ENCODE measurements at regions of chr2 and their contacts with region 1.

Region 1: DNA sequence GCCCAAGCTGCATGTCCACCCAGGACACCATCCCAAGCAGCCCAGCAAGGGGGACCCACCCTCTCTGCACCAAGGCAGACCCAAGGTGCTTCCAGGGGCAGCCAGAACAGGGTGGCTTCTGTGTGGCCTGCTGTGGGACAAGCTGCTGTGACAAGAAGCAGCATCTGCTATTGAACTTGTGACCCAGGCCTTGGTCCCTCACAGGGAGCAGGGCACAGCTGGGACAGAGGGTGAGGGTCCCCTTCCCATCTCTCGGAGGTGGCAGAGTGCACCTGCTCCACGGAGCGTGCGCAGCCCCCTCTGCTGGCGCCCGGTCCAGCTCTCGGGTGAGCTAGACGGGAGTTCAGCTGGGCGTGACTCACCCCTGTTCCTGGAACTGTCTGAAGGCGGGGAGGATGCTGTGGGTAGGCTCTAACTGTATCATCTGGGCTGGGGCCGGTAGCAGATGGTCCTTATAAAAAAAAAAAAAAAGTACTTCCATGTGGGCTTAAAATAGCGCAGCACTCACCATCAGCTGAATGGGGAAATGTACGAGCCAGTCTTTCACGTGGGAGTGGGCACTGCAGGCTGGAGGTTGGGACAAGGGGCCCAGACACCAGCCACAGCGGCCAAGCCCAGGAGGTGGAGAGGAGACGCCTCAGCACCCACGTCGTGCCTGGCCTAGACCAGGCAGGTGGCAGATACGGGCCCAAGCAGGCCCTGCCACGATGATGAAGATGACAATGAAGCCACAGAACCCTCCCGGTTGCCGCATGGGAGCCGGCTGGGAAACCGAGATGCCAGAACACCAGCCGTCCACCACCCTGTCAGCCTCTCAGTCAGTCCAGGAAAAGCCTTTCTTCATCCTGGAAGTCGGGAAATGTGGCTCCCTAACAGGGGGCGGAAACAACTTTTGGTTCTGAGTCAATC is 136.8 kb upstream of the ID2 start:
- DNase-seq: peak; percentile 96
- H3K4me3 Mint-ChIP-seq: peak overlapping the region; percentile 52
- H3K27ac Mint-ChIP-seq: peak overlapping the region; percentile 100
- H3K4me1 Mint-ChIP-seq: peaks cover 72% of the 10 kb centered on the region
- H3K27me3 Mint-ChIP-seq: no peaks in the 10 kb centered on the region

Region 2: DNA sequence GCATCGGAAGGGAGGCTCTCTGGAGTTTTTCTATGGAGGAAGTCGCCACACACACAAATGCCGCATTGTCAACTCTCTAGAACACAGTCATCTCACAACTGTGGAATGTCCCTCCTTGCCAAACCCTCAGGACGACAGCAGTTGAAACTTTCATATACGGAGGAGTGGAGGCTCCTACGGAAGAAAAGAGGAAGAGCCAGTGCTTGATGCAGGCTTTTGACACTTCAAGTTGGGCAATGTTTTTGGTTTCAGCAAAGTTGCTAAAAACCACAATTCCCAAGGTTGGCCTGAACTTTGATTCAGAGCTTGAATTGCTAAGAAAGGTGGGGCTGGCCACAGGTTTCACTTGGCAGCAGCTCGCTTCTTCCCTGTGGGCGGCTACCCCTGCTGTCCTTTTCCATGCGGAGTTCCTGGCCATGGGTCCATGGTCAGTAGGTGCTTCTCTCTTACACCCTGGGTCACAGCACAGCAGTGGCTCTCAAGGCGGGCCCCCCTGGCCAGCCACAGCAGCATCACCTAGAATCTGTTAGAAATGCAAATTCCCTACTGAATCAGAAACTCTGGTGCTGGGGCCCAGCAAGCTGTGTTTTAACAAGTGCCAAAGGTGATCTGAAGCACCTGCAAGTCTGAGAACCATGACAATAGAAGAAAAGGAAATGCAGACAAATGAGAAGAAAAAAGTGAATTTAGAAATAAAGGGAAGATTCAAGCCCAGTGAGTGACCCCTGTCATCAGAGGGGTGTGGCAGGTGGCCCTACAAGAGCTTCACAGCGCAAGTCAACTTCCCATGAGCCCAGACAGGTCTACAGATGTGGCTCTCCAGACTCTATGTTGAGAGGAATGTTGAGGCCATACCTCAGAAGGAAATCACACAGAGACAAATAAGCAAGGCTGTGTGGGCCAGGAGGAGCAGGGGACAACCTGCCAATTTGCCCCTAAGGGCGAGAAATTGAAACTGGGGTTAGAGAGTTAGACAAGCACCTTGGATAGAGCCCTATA is 771.4 kb before region 1 on chr2:
- CTCF ChIA-PET with region 1: no interaction called
- POLR2A ChIA-PET with region 1: no interaction called
- intact Hi-C with region 1: loop called (anchors 5 kb)
- DNase-seq: peak; percentile 65
- H3K4me3 Mint-ChIP-seq: no peak overlapping the region
- H3K27ac Mint-ChIP-seq: peak overlapping the region; percentile 66
- H3K4me1 Mint-ChIP-seq: peaks cover 33% of the 10 kb centered on the region
- H3K27me3 Mint-ChIP-seq: peaks cover 12% of the 10 kb centered on the region

Region 3: GRCh38 chr2:8049851-8050571 is 495.0 kb before region 1 on chr2:
- CTCF ChIA-PET with region 1: no interaction called
- POLR2A ChIA-PET with region 1: no interaction called
- intact Hi-C with region 1: loop called (anchors 1 kb)
- DNase-seq: peak; percentile 88
- H3K4me3 Mint-ChIP-seq: no peak overlapping the region
- H3K27ac Mint-ChIP-seq: peak overlapping the region; percentile 78
- H3K4me1 Mint-ChIP-seq: peaks cover 28% of the 10 kb centered on the region
- H3K27me3 Mint-ChIP-seq: peaks cover 1% of the 10 kb centered on the region

Region 4: GRCh38 chr2:8352296-8352695 is 192.7 kb before region 1 on chr2:
- CTCF ChIA-PET with region 1: no interaction called
- POLR2A ChIA-PET with region 1: no interaction called
- intact Hi-C with region 1: no loop called
- DNase-seq: no peak
- H3K4me3 Mint-ChIP-seq: no peak overlapping the region
- H3K27ac Mint-ChIP-seq: no peak overlapping the region
- H3K4me1 Mint-ChIP-seq: no peaks in the 10 kb centered on the region
- H3K27me3 Mint-ChIP-seq: no peaks in the 10 kb centered on the region

Region 5: DNA sequence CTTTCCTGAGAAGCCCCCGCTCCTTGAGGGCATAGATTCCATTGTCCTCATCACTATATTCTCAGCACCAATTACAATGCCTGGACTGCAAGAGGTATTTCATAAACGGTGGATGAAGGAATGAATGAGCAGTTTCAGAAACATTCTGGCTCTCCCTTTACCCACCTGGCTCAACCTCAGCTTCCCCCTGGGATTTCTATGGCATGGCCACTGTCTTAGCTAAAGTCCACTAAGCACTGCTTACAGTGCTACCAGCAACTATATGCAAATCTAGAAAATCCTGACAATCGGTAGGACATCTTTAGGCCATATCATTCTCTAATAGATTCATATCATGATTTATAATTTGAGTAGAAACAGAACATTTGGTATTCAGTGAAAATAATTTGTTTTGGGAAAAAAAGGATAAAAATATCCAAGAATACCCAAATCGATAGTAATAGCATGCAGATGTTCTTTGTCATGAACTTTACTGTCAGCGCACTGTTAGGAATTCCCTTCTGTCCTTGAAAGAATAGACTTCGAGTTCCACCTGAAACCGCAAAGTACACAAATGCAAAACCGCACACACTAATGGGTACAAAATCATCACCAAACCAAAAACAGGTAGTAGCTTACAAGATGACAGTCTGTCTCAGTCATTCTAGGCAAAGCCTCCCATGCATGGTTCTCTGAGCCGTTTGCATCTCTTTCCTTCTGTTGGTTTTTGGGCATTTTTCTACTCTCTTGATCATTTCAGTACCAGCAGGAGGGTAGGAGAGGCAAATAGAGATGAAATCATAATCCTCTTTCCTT is 166.8 kb before region 1 on chr2:
- CTCF ChIA-PET with region 1: no interaction called
- POLR2A ChIA-PET with region 1: no interaction called
- intact Hi-C with region 1: loop called (anchors 1 kb)
- DNase-seq: peak; percentile 49
- H3K4me3 Mint-ChIP-seq: no peak overlapping the region
- H3K27ac Mint-ChIP-seq: peak overlapping the region; percentile 56
- H3K4me1 Mint-ChIP-seq: peaks cover 38% of the 10 kb centered on the region
- H3K27me3 Mint-ChIP-seq: no peaks in the 10 kb centered on the region

Region 6: GRCh38 chr2:8488001-8488738 is 56.9 kb before region 1 on chr2:
- CTCF ChIA-PET with region 1: interaction called, 27 read pairs
- POLR2A ChIA-PET with region 1: interaction called, 92 read pairs
- intact Hi-C with region 1: loop called (anchors 1 kb)
- DNase-seq: peak; percentile 88
- H3K4me3 Mint-ChIP-seq: peak overlapping the region; percentile 77
- H3K27ac Mint-ChIP-seq: peak overlapping the region; percentile 91
- H3K4me1 Mint-ChIP-seq: peaks cover 72% of the 10 kb centered on the region
- H3K27me3 Mint-ChIP-seq: no peaks in the 10 kb centered on the region

Region 7: DNA sequence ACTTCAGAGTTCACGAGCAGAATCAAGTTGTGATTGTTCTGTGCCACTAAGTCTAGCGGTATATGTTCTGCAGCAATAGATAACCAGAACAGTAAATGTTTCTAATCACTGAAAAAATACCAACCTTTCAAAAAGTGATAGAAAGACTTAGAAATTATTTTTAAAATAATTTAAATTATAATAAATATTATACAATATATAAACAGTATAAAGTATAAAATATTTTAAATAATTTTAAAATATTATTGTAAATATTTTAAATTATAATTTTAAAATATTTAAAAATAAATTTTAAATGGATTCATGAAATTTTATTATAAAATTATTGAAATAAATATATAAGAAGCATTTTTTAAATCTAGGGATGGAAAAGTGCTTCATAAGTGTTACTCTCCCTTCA is 10.5 kb after region 1 on chr2:
- CTCF ChIA-PET with region 1: no interaction called
- POLR2A ChIA-PET with region 1: no interaction called
- intact Hi-C with region 1: no loop called
- DNase-seq: no peak
- H3K4me3 Mint-ChIP-seq: no peak overlapping the region
- H3K27ac Mint-ChIP-seq: no peak overlapping the region
- H3K4me1 Mint-ChIP-seq: peaks cover 12% of the 10 kb centered on the region
- H3K27me3 Mint-ChIP-seq: no peaks in the 10 kb centered on the region

Region 8: GRCh38 chr2:8608411-8608954 is 63.4 kb after region 1 on chr2:
- CTCF ChIA-PET with region 1: interaction called, 3 read pairs
- POLR2A ChIA-PET with region 1: interaction called, 6 read pairs
- intact Hi-C with region 1: loop called (anchors 1 kb)
- DNase-seq: peak; percentile 67
- H3K4me3 Mint-ChIP-seq: no peak overlapping the region
- H3K27ac Mint-ChIP-seq: peak overlapping the region; percentile 72
- H3K4me1 Mint-ChIP-seq: peaks cover 34% of the 10 kb centered on the region
- H3K27me3 Mint-ChIP-seq: no peaks in the 10 kb centered on the region

Measured in activated CD4-positive, alpha-beta memory T cell treated with anti-CD3 and anti-CD28 coated beads for 36 hours (primary cell).